ENCODE measurements at regions of chr2 and their contacts with region 1.

Region 1: DNA sequence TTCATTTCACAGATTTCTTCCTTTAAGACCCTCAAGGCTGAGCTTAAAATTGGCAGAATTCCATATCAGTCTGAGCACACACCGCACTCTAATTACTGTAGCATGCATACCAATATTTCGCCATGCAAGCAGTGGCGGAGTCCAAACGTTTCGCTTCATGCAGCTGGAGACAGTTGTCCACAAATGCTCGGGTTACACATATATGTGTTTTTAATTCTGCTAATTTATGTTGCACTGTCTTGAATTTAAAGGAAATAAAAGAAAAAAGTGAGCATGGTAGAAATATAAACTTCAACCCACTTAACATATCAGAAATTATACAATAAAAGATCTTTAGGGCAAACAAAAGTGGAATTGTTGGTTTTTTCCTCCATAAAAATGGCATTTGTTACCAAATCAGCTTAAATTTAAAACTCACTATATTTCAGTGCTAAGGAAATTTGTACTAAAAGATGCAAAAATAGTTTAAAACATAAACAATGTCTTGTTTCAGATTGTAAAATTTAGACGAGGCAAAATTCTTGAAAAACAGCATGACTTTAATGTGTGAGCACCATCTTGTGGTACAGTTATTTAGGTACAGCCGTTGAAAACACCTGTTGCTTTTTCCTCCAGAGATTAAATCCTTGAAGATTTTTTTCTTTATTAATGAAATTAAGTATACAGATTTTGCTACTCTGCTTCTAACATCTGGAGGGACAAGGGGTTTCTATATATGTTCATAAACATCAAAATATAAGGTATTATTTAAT is 24.1 kb upstream of the KANSL1L start:
- DNase-seq: no peak
- ATAC-seq: no peak
- H3K4me3 Mint-ChIP-seq: no peak overlapping the region
- H3K27ac Mint-ChIP-seq: no peak overlapping the region
- H3K4me1 Mint-ChIP-seq: no peaks in the 10 kb centered on the region
- H3K27me3 Mint-ChIP-seq: no peaks in the 10 kb centered on the region
- CTCF ChIP-seq: peak; percentile 69

Region 2: DNA sequence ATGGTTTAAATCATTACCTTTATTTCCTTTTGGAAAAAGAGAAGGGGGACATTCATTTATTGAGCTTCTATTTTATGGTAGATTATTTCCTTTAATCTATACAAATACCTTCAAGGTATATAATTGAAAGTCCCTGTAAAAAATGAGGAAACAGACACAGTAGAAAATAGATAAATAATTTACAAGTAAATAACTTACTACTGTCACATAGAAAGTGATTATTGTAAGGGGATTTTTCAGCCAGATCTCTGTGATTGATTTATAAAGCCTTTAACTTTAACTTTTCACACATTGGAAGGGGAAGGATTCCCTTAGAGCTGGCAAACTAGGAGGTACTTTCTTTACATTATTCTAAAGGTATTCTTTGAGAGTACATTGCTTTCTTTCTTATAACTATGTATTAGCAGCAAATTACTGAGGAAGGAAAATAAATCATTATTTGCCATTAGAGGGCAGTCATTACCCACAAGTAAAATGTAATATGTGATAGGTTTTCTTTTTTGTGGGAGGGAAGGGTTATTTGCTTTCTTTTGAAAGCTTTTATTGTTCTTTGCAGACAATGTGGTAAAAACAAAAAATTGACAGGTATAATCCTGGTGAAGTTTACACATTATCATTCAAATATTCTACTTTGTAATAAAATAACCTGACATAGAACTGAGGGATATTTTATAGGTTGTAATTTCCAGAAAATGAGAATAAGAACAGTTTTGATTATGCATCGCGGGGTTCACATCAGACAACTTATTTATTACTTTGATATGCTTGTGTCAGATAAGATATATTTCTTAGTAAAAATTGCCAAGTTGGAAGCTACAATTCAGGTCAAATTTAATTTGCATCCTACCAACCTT is 217.7 kb before region 1 on chr2:
- CTCF ChIA-PET with region 1: interaction called, 47 read pairs
- POLR2A ChIA-PET with region 1: no interaction called
- intact Hi-C with region 1: loop called (anchors 1 kb)
- DNase-seq: no peak
- ATAC-seq: no peak
- H3K4me3 Mint-ChIP-seq: no peak overlapping the region
- H3K27ac Mint-ChIP-seq: no peak overlapping the region
- H3K4me1 Mint-ChIP-seq: no peaks in the 10 kb centered on the region
- H3K27me3 Mint-ChIP-seq: peaks cover 4% of the 10 kb centered on the region
- CTCF ChIP-seq: peak; percentile 65

Region 3: DNA sequence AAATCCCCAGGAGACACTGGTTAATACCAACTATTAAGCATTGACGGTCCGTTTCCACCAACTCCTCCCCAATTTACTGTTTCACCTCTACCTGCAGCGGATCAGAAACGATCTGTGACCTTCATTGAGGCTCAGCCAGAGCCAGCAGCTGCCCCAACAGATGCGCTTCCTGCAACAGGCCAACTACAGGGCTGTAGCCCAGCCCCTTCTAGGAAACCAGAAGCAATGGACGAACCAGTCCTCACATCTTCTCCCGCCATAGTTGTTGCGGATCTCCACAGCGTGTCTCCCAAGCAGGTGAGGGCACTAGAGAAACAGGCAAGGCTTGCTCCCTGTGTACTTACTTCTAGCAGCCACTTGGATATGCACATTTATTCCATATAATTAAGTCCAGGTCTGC is 201.3 kb before region 1 on chr2:
- CTCF ChIA-PET with region 1: interaction called, 10 read pairs
- POLR2A ChIA-PET with region 1: no interaction called
- intact Hi-C with region 1: no loop called
- DNase-seq: no peak
- ATAC-seq: no peak
- H3K4me3 Mint-ChIP-seq: no peak overlapping the region
- H3K27ac Mint-ChIP-seq: no peak overlapping the region
- H3K4me1 Mint-ChIP-seq: no peaks in the 10 kb centered on the region
- H3K27me3 Mint-ChIP-seq: peaks cover 9% of the 10 kb centered on the region
- CTCF ChIP-seq: no peak

Region 4: GRCh38 chr2:210072922-210073509 is 122.3 kb before region 1 on chr2:
- CTCF ChIA-PET with region 1: interaction called, 8 read pairs
- POLR2A ChIA-PET with region 1: no interaction called
- intact Hi-C with region 1: loop called (anchors 2 kb)
- DNase-seq: peak; percentile 15
- ATAC-seq: no peak
- H3K4me3 Mint-ChIP-seq: no peak overlapping the region
- H3K27ac Mint-ChIP-seq: no peak overlapping the region
- H3K4me1 Mint-ChIP-seq: no peaks in the 10 kb centered on the region
- H3K27me3 Mint-ChIP-seq: no peaks in the 10 kb centered on the region
- CTCF ChIP-seq: no peak

Region 5: DNA sequence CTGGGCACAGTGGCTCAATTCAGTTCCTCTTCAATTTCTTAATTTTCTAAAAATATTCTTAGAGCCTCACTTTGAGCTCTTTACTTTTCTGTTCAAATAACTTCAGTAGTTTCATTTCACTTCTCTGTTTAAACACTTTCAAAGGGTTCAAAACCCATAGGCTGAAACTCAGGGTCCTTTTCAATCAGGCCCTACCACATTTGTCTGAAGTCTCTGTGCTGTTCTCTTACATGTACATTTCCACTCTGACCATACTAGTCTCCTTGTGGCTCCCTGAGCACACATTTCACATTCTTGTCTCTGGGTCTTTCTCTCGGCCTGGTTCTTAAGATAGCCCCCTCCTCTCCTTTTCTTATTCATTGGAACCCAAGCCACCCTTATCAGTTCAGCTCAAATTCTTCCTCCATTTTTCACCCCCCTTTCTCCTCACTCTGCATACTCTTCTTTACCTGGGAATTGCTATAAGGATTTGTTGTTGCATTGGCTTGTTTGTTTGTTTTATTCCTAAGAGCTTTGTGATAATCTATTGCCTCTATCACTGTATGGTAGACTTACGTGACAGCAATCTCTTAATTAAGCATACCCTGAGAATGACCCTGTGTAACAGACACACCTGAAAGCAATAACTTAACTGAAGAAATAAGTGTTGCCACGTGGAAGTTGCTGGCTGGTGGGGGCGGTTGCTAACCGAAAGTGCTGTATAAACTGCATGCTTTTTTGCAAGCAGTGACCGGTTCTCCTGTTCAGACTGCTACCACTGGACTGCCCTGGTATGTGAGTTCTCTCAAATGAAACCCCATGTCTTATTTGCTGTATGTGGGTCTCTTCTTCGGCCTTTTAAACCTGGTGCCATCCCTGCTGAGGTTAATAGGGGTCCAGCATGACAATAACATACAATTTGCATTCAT is 57.7 kb after region 1 on chr2:
- CTCF ChIA-PET with region 1: no interaction called
- POLR2A ChIA-PET with region 1: no interaction called
- intact Hi-C with region 1: no loop called
- DNase-seq: no peak
- ATAC-seq: no peak
- H3K4me3 Mint-ChIP-seq: no peak overlapping the region
- H3K27ac Mint-ChIP-seq: no peak overlapping the region
- H3K4me1 Mint-ChIP-seq: no peaks in the 10 kb centered on the region
- H3K27me3 Mint-ChIP-seq: no peaks in the 10 kb centered on the region
- CTCF ChIP-seq: no peak